ENCODE measurements at regions of chr4 and their contacts with region 1.

Region 1: GRCh38 chr4:14916554-14917297 is 85.6 kb upstream of the CPEB2 start:
- DNase-seq: peak in 1 of 2 donors; percentile 49
- ATAC-seq: peak; percentile 81 to 96 (median 91)
- H3K4me3 ChIP-seq: peak overlapping the region in 1 of 10 donors; percentile 10
- H3K27ac ChIP-seq: peak overlapping the region; percentile 1 to 85 (median 66)
- H3K4me1 ChIP-seq: peaks cover 0 to 22% (median 8%) of the 10 kb centered on the region in 9 donors
- H3K27me3 ChIP-seq: no peaks in the 10 kb centered on the region
- CTCF ChIP-seq: no peak

Region 2: GRCh38 chr4:14841801-14842768 is 74.6 kb before region 1 on chr4:
- intact Hi-C with region 1: loop called in 3 of 10 experiments (anchors 2 to 10 kb)
- DNase-seq: peak; percentile 28 to 54
- ATAC-seq: peak; percentile 78 to 99 (median 93)
- H3K4me3 ChIP-seq: peak overlapping the region in 1 of 10 donors; percentile 7
- H3K27ac ChIP-seq: peak overlapping the region in 9 of 10 donors; percentile 29 to 81 (median 74)
- H3K4me1 ChIP-seq: peaks cover 0 to 24% (median 19%) of the 10 kb centered on the region in 9 donors
- H3K27me3 ChIP-seq: no peaks in the 10 kb centered on the region
- CTCF ChIP-seq: no peak

Region 3: GRCh38 chr4:14967982-14968381 is 51.3 kb after region 1 on chr4:
- intact Hi-C with region 1: no loop called
- DNase-seq: no peak
- ATAC-seq: no peak
- H3K4me3 ChIP-seq: no peak overlapping the region
- H3K27ac ChIP-seq: no peak overlapping the region
- H3K4me1 ChIP-seq: no peaks in the 10 kb centered on the region
- H3K27me3 ChIP-seq: no peaks in the 10 kb centered on the region
- CTCF ChIP-seq: no peak

Region 4: GRCh38 chr4:14984448-14984847 is 67.7 kb after region 1 on chr4:
- intact Hi-C with region 1: loop called in 1 of 10 experiments (anchors 10 kb)
- DNase-seq: no peak
- ATAC-seq: no peak
- H3K4me3 ChIP-seq: no peak overlapping the region
- H3K27ac ChIP-seq: no peak overlapping the region
- H3K4me1 ChIP-seq: no peaks in the 10 kb centered on the region
- H3K27me3 ChIP-seq: no peaks in the 10 kb centered on the region
- CTCF ChIP-seq: no peak

Region 5: DNA sequence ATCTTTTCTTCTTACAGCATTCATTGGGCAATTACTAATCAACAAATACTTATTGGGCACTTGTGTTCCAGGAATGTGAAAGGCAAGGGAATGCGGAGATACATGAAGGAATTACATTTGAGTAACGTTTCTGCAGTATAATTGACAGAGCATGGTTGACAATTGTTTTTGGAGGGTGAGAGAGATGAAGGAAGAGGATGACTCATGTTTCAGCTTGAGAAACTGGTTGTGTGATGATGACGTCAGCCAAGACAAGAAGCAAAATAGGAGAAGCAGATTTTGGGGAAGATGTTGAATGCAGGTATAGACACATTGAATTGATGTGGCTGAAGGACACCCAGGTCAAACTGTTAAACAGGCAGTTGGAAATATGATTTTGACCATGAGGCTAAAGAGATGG is 77.5 kb after region 1 on chr4:
- intact Hi-C with region 1: loop called in 2 of 10 experiments (anchors 10 kb)
- DNase-seq: no peak
- ATAC-seq: no peak
- H3K4me3 ChIP-seq: no peak overlapping the region
- H3K27ac ChIP-seq: no peak overlapping the region
- H3K4me1 ChIP-seq: peaks cover 0 to 4% (median 0%) of the 10 kb centered on the region in 9 donors
- H3K27me3 ChIP-seq: no peaks in the 10 kb centered on the region
- CTCF ChIP-seq: no peak